GM13977 (cell line): ENCODE measurements at regions of chr5 and their contacts with region 1.

Region 1: DNA sequence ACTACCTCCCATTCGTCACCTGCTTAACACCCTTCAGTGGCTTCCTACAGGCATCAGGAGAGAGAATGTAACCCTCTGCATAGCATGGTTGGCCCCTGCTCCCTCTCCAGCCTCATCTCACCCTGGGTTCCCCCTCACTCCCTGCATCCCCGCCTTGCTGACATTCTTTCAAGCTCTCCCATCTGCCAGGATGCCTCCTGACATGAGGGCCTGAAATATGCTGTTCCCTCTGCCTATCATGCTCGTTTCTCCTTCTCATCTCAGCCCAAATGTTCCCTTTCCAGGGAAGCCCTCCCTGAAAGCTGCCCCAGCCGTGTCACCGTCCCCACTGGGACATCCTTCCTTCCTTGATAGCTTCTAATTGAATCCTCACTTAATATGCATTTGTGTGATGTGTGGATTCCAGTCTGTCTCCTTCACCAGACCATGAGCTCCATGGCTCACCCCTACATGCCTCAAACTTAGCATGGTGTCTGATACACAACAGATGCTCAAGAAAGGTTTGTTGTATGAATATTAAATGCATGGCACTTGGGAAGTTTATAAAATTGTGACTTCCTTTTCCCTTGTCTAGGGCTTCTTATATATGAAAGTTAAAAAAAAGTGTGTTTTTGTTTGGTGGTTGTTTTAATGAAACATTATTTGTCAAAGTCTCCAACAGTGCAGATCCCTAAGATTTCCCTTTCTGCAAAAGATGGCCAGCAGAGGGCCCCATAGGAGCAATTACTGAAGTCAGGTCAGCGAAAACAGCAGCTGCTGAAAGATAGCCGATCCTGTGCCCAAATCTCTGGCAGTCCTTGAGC is 7.3 kb upstream of the C5orf58 start:
- DNase-seq: peak; percentile 71
- CTCF ChIP-seq: peak; percentile 86

Region 2: GRCh38 chr5:170420780-170421412 is 195.4 kb after region 1 on chr5:
- in situ Hi-C with region 1: loop called (anchors 10 kb)
- DNase-seq: peak; percentile 68
- CTCF ChIP-seq: peak; percentile 72

Region 3: GRCh38 chr5:170603578-170604565 is 378.3 kb after region 1 on chr5:
- in situ Hi-C with region 1: loop called (anchors 25 kb)
- DNase-seq: peak; percentile 71
- CTCF ChIP-seq: peak; percentile 64